PC-9 (cell line): ENCODE measurements at regions of chr1 and their contacts with region 1.

Region 1: GRCh38 chr1:54623230-54624007 is at the start of gene FAM151A:
- DNase-seq: no peak
- H3K4me3 ChIP-seq: no peak within 1 kb of the TSS
- H3K27ac ChIP-seq: no peak within 1 kb of the TSS
- H3K4me1 ChIP-seq: no peaks in the 10 kb centered on the region
- H3K27me3 ChIP-seq: peaks cover 25% of the 10 kb centered on the region
- CTCF ChIP-seq: no peak
- total RNA-seq, gene FAM151A: not detected in 2 replicates

Region 2: DNA sequence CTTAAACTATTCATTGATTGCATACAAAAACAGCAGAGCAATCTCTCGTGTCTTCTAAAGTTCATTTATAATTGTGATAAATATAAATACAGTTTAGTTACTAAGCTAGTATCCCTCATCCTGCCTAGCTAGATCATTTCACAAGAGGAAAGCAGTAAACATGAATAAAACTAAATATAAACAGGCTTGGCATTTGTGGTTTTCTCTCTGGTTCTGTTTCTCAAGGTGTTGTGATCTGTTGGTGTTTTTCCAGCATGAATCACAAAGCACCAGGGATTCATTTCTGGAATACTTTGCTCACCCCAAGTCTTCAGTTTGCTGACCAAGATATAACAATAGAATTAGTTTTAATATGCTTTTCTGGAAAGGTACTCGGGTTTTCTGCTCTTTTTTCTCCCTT is 851.8 kb before region 1 on chr1:
- CTCF ChIA-PET with region 1: no interaction called
- POLR2A ChIA-PET with region 1: no interaction called
- intact Hi-C with region 1: no loop called
- DNase-seq: no peak
- H3K4me3 ChIP-seq: no peak overlapping the region
- H3K27ac ChIP-seq: no peak overlapping the region
- H3K4me1 ChIP-seq: no peaks in the 10 kb centered on the region
- H3K27me3 ChIP-seq: no peaks in the 10 kb centered on the region
- CTCF ChIP-seq: no peak

Region 3: DNA sequence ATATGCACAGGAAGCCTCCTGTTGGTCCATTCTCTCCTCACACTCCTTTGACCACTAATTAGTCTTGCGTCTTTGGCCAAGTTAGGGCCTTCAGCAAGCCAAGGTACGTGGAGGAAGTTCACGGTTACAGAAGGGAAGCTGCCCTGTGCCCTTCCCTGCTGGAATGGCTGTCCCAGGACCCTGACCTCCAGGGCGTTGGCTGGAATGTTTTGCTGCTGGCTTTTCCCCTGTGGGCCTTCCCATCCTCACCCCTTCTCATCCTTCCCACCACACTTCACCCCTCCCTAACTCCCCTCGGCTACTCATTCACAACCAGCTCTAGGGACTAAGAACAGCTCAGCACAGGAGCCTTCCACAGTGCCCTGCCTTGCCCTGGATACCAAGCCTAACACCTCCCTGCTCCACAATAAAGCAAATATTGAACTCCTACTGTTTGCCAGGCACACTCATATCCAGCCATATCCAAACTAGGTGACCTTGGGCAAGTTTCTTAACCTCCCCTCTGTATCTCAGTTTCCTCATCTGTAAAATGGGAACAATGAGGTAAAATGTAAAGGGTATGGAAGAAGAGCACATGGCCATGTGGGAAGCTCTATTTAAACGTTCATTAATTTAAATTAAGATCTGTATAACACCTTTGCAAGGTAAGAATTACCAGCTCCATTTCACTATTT is 461.8 kb before region 1 on chr1:
- CTCF ChIA-PET with region 1: no interaction called
- POLR2A ChIA-PET with region 1: interaction called, 13 read pairs
- intact Hi-C with region 1: no loop called
- DNase-seq: no peak
- H3K4me3 ChIP-seq: no peak overlapping the region
- H3K27ac ChIP-seq: no peak overlapping the region
- H3K4me1 ChIP-seq: peaks cover 6% of the 10 kb centered on the region; the same call in 1 of the 2 replicates
- H3K27me3 ChIP-seq: no peaks in the 10 kb centered on the region
- CTCF ChIP-seq: no peak